Activated naive CD4-positive, alpha-beta T cell treated with anti-CD3 and anti-CD28 coated beads for 36 hours (primary cell): ENCODE measurements at regions of chr3 and their contacts with region 1.

Region 1: DNA sequence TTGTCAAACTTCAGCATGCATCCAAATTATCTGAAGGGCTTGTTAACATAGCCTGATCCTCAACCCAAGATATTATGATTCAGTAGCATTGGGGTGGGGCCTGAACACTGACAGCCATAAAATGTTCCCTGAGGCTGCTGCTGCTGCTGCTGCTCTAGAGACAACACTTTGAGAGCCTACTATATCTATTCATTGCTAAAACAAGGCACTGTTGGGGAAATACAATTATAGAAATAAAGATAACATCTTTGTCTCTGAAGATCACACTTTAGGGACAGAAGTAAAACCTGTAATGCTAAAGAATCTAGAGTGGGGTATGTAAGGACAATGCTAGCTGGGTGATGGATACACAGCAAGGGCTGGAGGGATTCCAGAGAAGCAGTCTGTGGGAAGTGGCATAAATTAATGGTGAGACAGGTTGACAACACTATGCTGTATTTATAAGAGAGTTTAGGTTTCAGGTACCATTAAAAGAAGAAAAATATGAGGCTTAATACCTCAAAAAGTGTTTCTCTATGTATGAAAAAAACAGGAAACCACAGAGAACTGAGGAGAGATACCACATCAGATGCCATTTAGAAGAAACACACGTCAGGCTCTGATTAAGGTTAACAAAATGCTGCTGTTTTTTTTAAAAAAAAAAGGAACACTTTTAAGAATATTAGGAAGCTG is 115.9 kb downstream of the CBLB start:
- DNase-seq: peak; percentile 46
- H3K4me3 Mint-ChIP-seq: peak overlapping the region; percentile 42
- H3K27ac Mint-ChIP-seq: peak overlapping the region; percentile 92
- H3K4me1 Mint-ChIP-seq: peaks cover 77% of the 10 kb centered on the region
- H3K27me3 Mint-ChIP-seq: no peaks in the 10 kb centered on the region

Region 2: DNA sequence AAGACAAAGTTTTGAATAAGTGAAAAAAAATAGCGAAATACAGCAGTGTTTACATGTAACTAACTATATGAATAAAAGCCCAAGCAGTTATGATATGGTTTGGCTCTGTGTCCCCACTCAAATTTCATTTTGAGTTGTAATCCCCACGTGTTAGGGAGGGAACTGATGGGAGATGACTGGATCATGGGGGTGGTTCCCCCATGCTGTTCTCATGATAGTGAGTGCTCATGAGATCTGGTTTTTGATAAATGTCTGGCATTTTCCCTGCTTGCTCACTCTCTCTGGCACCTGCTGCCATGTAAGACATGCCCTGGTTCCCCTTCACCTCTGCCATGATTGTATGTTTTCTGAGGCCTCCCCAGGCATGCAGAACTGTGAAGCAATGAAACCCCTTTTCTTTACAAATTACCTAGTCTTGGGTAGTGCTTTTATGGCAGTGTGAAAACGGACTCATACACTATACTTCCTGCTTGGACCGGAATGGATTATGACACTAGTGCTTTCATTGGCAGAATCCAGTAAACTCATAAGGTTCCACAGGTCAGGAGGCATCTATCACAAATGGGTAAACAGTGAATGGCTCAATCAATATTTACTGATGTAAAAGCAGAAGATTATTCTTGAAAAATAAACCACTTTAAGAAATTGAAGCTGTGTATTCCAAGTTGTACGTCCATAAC is 76.1 kb before region 1 on chr3:
- CTCF ChIA-PET with region 1: no interaction called
- intact Hi-C with region 1: loop called (anchors 2 kb)
- DNase-seq: peak; percentile 77
- H3K4me3 Mint-ChIP-seq: no peak overlapping the region
- H3K27ac Mint-ChIP-seq: peak overlapping the region; percentile 87
- H3K4me1 Mint-ChIP-seq: peaks cover 18% of the 10 kb centered on the region
- H3K27me3 Mint-ChIP-seq: no peaks in the 10 kb centered on the region

Region 3: DNA sequence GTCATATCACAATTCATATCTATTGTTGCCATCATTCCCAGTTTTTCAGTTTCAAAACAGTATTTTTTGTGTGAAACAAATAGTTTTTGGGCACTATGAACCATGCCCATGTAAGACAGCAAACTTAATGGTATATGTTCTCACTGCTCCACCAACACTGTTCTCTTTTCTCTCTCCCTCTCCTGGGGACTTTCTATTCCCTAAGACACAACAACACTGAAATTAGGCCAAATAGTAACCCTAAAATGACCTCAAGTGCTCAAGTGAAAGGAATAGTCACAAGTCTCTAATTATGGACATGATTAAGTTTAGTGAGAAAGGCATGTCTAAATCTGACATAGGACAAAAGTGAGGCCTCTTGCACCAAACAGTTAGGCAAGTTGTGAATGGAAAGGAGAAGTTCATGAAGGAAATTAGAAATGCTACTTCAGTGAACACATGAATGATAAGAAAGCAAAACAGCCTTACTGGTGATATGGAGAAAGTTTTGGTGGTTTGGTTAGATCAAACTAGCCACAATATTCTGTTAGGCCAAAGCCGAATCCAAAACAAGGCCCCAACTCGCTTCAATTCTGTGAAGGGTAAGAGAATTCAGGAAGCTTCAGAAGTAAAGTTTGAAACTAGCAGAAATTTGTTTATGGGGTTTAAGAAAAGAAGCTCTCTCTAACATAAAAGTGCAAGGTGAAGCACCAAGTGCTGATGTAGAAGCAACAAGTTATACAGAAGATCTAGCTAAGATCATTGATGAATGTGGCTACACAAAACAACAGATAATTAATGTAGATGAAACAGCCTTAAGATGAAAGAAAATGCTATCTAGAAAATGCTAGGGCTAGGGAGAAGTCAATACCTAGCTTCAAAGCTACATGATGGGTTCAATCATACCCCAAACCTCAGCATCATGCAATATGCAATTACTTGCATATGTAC is 11.8 kb after region 1 on chr3:
- CTCF ChIA-PET with region 1: no interaction called
- intact Hi-C with region 1: loop called (anchors 1 kb)
- DNase-seq: no peak
- H3K4me3 Mint-ChIP-seq: no peak overlapping the region
- H3K27ac Mint-ChIP-seq: peak overlapping the region; percentile 63
- H3K4me1 Mint-ChIP-seq: peaks cover 66% of the 10 kb centered on the region
- H3K27me3 Mint-ChIP-seq: no peaks in the 10 kb centered on the region

Region 4: GRCh38 chr3:105774444-105775180 is 21.7 kb after region 1 on chr3:
- CTCF ChIA-PET with region 1: no interaction called
- intact Hi-C with region 1: loop called (anchors 1 kb)
- DNase-seq: no peak
- H3K4me3 Mint-ChIP-seq: no peak overlapping the region
- H3K27ac Mint-ChIP-seq: peak overlapping the region; percentile 26
- H3K4me1 Mint-ChIP-seq: peaks cover 74% of the 10 kb centered on the region
- H3K27me3 Mint-ChIP-seq: no peaks in the 10 kb centered on the region

Region 5: DNA sequence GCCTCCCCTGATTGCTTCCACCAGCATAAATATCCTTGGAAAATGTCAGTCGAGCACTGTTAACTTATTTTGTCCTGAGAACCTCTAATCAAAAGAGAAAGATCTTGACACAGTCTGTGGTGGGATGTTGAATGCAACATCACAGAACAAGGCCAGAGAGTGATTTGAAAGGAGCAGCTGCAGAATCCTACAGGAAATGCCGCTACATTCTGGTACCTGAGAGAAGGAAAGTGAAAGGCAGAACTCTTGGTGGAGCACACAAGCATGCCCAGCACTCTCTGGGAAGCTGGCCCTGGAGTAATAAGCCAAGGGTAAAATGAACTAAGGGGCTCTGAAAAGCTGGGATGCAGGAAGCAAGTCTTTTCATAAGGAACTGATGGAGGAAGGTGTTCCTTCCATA is 40.2 kb after region 1 on chr3:
- CTCF ChIA-PET with region 1: no interaction called
- intact Hi-C with region 1: no loop called
- DNase-seq: no peak
- H3K4me3 Mint-ChIP-seq: no peak overlapping the region
- H3K27ac Mint-ChIP-seq: no peak overlapping the region
- H3K4me1 Mint-ChIP-seq: peaks cover 63% of the 10 kb centered on the region
- H3K27me3 Mint-ChIP-seq: no peaks in the 10 kb centered on the region

Region 6: DNA sequence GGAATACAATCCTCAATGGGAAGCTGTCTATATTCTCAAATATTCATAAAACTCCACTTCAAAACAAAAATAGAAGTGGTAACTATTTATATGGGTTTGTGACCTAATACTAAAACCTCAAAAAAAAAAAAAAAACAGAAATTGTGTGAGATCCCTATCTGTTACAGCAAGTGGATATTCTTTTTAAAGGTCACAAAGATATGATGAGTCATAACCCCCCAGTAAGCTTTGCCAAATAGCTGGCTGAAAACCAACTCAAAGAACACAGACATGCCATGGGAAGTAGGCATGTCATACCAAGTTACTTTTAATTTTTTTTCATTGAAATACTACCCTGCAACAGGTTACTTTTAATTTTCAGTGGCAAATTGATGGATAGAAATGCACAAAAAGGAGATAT is 53.5 kb after region 1 on chr3:
- CTCF ChIA-PET with region 1: no interaction called
- intact Hi-C with region 1: loop called (anchors 2 kb)
- DNase-seq: no peak
- H3K4me3 Mint-ChIP-seq: no peak overlapping the region
- H3K27ac Mint-ChIP-seq: no peak overlapping the region
- H3K4me1 Mint-ChIP-seq: peaks cover 62% of the 10 kb centered on the region
- H3K27me3 Mint-ChIP-seq: no peaks in the 10 kb centered on the region